Transverse colon (tissue), 4 donors: ENCODE measurements at regions of chr20 and their contacts with region 1.

Region 1: DNA sequence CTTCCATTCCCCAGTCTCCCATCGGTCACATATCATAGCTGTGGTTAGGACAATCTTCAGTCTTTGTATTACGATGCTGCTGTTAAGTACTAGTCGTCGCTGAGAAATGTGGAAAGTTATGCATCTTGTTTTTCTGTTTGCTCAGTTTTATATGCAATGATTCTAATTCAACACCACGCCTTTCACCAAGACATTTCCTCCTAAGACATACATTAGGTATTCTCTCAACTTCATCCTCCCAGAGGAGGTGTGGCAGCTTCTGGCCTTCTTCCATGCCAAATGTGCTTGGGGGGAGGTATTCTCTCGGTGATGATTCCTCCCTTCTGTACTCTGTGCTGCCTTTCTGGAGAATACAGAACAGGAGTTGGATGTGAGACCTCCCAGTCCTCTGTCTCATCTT is 66.1 kb downstream of the B4GALT5 start:
- DNase-seq: no peak
- H3K4me3 ChIP-seq: no peak overlapping the region
- H3K27ac ChIP-seq: no peak overlapping the region
- H3K4me1 ChIP-seq: peaks cover 0 to 9% (median 4%) of the 10 kb centered on the region in 4 donors
- H3K27me3 ChIP-seq: no peaks in the 10 kb centered on the region
- CTCF ChIP-seq: no peak
- EP300 ChIP-seq: no peak
- POLR2A ChIP-seq: no peak

Region 2: GRCh38 chr20:49549811-49550551 is 97.6 kb before region 1 on chr20:
- in situ Hi-C with region 1: no loop called
- intact Hi-C with region 1: no loop called
- DNase-seq: no peak
- H3K4me3 ChIP-seq: no peak overlapping the region
- H3K27ac ChIP-seq: no peak overlapping the region
- H3K4me1 ChIP-seq: peaks cover 0 to 19% (median 9%) of the 10 kb centered on the region in 4 donors
- H3K27me3 ChIP-seq: peaks cover 6% of the 10 kb centered on the region
- CTCF ChIP-seq: no peak
- EP300 ChIP-seq: no peak
- POLR2A ChIP-seq: no peak

Region 3: GRCh38 chr20:49674383-49675352 is 27.1 kb after region 1 on chr20:
- in situ Hi-C with region 1: no loop called
- intact Hi-C with region 1: loop called (anchors 1 kb)
- DNase-seq: peak; percentile 32
- H3K4me3 ChIP-seq: peak overlapping the region in 1 of 4 donors; percentile 31
- H3K27ac ChIP-seq: peak overlapping the region; percentile 84 to 93 (median 88)
- H3K4me1 ChIP-seq: peaks cover 47 to 100% (median 80%) of the 10 kb centered on the region in 4 donors
- H3K27me3 ChIP-seq: no peaks in the 10 kb centered on the region
- CTCF ChIP-seq: peak in 3 of 5 experiments; percentile 6 to 52 (median 9)
- EP300 ChIP-seq: no peak
- POLR2A ChIP-seq: peak; percentile 53